AG04449 (cell line): ENCODE measurements at regions of chr2 and their contacts with region 1.

Region 1: GRCh38 chr2:231411831-231412617 is 16.5 kb downstream of the B3GNT7 start:
- DNase-seq: no peak
- H3K4me3 ChIP-seq: peak overlapping the region; percentile 71
- CTCF ChIP-seq: peak; percentile 98

Region 2: DNA sequence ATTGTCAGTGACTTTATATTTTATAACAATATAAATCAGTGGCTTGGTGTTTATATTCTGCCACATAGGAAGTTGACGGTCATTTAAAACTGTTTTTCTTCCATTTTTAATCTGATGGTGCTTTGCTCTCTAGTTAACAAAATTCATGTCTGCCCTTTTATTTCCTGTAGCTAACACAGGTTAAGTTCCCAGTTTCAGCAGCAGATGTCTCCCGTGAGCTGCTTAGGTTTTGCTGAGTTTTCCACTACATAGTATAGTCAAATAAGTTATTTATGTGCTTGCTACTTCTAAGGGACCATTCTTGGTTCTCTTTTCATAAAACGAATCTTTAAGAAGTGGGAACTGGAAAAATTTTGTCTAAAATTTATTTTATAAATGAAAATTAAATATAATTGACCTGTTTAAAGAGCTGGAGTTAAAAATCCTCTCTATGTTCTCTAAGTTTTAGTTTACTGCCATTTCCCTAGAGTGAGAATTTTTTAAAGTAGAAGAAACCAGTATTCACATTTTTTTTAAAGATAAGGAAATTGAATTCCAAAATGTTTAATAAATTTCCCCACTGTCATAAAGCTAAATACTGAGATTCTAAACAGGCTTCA is 307.8 kb before region 1 on chr2:
- CTCF ChIA-PET with region 1: interaction called, 57 read pairs
- POLR2A ChIA-PET with region 1: no interaction called
- DNase-seq: peak; percentile 26
- H3K4me3 ChIP-seq: no peak overlapping the region
- CTCF ChIP-seq: peak; percentile 66

Region 3: DNA sequence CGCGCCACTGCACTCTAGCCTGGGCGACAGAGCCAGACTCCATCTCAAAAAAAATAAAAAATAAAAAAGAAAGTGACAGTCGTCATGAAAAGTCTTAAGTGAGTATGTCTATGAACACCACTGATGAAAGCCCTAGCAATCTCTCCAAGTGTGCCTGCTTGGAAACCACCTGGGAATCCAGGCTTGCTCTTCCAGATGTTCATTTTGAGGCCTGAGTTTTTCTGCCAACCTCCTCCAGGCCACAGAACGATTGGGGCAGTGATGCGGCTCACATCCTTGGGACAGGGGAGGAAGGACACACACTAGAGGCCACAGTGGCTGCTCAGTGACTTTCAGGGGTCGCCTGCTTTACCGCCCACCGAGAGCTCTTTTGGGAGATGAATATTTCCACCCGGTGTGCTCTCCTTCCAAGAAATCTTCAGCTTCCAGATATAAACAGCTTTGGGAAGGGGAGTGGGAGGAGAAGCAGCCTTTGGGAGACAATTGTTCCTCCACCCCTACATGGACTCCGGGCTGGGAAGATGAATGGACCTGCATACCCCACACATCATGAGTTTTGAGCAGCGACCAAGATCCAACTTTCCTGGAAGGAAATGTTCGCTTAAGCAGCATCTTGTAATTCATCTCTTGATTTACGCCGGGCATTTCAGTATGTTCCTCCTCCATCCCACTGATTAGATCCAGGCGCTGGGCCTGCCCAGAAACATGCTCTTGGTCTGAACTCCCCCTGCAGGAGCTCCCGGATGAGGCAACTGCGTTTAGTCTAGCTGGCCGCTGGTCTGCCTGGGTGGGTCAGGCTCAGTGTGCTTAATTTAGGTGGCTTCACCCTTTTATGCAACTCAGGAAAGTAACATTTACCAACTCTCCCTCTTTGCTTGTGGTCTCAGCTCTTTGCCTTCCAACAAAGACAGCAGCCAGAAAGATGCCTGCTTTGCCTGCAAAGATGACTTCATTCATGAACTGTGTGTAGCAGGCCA is 219.8 kb before region 1 on chr2:
- CTCF ChIA-PET with region 1: interaction called, 11 read pairs
- POLR2A ChIA-PET with region 1: no interaction called
- DNase-seq: peak; percentile 60
- H3K4me3 ChIP-seq: no peak overlapping the region
- CTCF ChIP-seq: peak; percentile 89

Region 4: GRCh38 chr2:231238689-231239088 is 173.3 kb before region 1 on chr2:
- CTCF ChIA-PET with region 1: interaction called, 21 read pairs
- POLR2A ChIA-PET with region 1: interaction called, 5 read pairs
- DNase-seq: no peak
- H3K4me3 ChIP-seq: no peak overlapping the region
- CTCF ChIP-seq: no peak

Region 5: DNA sequence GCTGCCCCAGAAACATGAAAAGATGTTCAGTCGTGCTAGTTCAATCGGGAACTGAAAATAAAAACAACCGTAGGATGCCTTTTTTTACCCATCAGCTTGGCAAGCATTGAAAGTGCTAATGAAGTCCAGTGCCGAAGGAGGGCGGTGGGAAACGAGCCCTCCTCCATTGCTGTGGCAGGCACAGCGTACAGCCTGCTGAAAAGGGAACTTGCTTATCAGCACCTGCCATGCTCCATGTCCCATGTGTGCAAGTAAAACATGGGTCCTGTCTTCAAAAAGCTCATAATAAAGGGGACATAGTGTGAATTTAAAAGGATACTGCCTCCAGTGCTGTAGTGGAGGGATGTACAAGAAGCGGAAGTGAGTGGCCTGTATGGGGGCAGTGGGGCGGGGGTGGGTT is 131.2 kb before region 1 on chr2:
- CTCF ChIA-PET with region 1: interaction called, 23 read pairs
- POLR2A ChIA-PET with region 1: no interaction called
- DNase-seq: no peak
- H3K4me3 ChIP-seq: no peak overlapping the region
- CTCF ChIP-seq: no peak

Region 6: DNA sequence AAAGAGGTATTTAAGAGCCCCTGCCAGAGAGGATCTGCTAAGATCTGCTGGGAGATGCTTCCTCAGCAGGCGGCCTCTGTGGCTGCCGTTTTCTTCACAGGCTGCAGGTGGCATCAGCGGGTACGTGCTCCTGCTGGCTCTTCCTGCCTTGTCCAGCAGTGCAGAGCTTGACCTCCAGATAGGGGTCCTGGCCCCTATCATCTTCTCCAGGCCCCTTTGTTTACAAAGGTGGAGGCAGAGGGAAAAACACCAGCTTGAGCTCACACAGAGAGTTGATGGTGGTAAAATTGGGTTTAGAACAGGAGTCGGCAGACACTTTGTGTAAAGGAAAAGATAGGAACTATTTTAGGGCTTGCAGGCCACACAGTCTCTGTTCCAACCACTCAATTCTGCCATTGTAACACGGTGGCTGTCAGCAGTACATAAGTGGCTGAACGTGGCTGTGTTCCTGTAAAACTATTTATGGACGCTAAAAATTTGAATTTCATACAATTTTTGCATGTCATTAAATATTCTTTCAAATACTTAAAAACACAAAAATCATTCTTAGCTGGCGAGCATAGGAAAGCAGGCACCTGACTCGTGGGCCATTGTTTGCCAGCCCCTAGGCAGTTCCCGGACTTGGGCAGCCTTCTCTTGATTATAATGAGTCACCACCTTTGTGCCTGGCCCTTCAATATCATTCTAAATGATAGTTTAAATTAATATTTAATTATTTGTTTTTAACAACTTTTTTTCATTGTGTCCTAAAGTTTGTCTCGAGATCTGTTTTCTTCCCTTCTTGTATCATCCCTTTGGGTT is 114.7 kb before region 1 on chr2:
- CTCF ChIA-PET with region 1: interaction called, 206 read pairs
- POLR2A ChIA-PET with region 1: interaction called, 3 read pairs
- DNase-seq: no peak
- H3K4me3 ChIP-seq: no peak overlapping the region
- CTCF ChIP-seq: peak; percentile 86

Region 7: GRCh38 chr2:231429152-231429551 is 17.1 kb after region 1 on chr2:
- CTCF ChIA-PET with region 1: interaction called, 29 read pairs
- POLR2A ChIA-PET with region 1: no interaction called
- DNase-seq: no peak
- H3K4me3 ChIP-seq: no peak overlapping the region
- CTCF ChIP-seq: no peak

Region 8: DNA sequence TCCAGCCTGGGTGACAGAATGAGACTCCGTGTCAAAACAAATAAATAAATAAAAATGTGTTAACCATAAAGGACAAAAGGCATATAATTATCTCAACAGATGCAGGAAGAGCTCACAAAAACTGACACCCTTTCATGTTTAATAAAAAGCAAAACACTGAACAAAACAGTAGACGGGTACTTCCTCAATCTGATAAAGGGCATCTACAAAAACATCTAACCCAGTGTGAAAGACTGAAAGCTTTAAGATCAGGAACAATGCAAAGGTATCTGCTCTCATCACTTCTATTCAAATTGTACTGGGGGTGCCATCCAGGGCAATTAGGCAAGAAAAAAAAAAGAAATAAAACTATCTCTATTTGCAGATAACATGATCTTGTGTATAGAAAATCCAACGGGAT is 63.9 kb after region 1 on chr2:
- CTCF ChIA-PET with region 1: no interaction called
- POLR2A ChIA-PET with region 1: no interaction called
- DNase-seq: no peak
- H3K4me3 ChIP-seq: no peak overlapping the region
- CTCF ChIP-seq: no peak